MCF 10A (cell line): ENCODE measurements at regions of chr9 and their contacts with region 1.

Region 1: GRCh38 chr9:119453490-119453911 is 84.3 kb upstream of the BRINP1 start:
- DNase-seq: peak; percentile 66
- H3K4me3 Mint-ChIP-seq: peak overlapping the region; percentile 40
- H3K27ac Mint-ChIP-seq: peak overlapping the region; percentile 75
- H3K4me1 Mint-ChIP-seq: peaks cover 41% of the 10 kb centered on the region
- H3K27me3 Mint-ChIP-seq: no peaks in the 10 kb centered on the region
- CTCF ChIP-seq: no peak

Region 2: DNA sequence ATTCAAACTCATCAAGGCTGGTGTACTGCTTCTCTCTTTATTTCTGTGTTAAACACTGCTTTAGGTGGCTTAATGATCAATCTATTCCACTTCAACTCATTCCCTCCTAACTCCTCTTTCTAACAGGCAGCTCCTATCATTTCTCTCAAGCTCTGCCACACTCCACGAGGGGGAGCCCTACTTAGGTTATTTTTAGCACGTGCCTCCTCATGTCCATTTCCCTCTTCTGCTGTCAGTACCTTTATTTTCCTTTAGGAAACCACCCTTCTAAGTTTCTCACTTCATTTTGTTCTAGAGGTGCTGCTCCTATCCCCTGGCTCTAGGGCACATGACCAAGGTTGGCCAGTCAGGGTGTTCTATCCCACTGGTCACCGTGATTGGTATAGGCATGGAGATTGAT is 77.6 kb before region 1 on chr9:
- CTCF ChIA-PET with region 1: interaction called, 10 read pairs
- POLR2A ChIA-PET with region 1: interaction called, 4 read pairs
- intact Hi-C with region 1: loop called (anchors 2 kb)
- DNase-seq: peak; percentile 62
- H3K4me3 Mint-ChIP-seq: no peak overlapping the region
- H3K27ac Mint-ChIP-seq: no peak overlapping the region
- H3K4me1 Mint-ChIP-seq: no peaks in the 10 kb centered on the region
- H3K27me3 Mint-ChIP-seq: no peaks in the 10 kb centered on the region
- CTCF ChIP-seq: peak; percentile 36

Region 3: GRCh38 chr9:119526698-119527097 is 73.2 kb after region 1 on chr9:
- CTCF ChIA-PET with region 1: no interaction called
- POLR2A ChIA-PET with region 1: no interaction called
- intact Hi-C with region 1: no loop called
- DNase-seq: no peak
- H3K4me3 Mint-ChIP-seq: no peak overlapping the region
- H3K27ac Mint-ChIP-seq: no peak overlapping the region
- H3K4me1 Mint-ChIP-seq: no peaks in the 10 kb centered on the region
- H3K27me3 Mint-ChIP-seq: no peaks in the 10 kb centered on the region
- CTCF ChIP-seq: no peak